OCI-LY7 (cell line): ENCODE measurements at regions of chr18 and their contacts with region 1.

Region 1: DNA sequence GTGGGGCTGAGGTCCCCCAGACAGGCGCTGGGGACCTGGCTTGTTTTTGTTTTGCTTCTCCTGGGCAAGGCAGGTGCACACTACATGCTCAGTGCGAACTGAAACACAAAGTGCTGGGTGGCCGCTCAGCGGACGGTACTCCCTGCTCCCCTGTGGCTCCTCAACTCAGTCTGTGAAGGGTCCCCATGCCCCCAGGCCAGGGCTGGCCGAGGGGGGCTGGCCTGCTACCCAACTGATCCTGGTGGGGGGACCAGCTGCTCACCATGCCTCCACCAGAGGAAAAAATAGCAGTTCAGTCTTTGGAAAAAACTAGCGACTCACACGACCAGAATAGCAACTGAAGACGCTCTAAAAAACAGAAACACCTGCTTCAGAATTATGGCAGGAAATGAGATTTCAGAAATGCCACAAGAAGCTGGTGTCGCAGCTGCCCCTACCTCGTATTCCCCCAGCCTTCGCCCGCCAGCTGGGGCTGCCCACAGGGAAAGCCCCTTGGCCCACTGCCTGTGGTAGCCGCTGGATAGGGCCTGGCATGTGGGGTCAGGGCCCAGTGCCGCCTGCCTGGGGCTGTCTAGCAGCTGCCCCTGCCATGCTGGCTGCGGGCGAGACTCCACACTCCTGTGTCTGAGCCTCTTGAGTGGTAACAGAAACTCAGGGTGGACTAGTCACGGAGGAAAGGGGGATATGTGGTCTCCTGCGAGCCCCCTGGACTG is 43.7 kb downstream of the MEX3C start:
- DNase-seq: peak; percentile 87
- H3K4me3 ChIP-seq: peak overlapping the region; percentile 59
- H3K27ac ChIP-seq: peak overlapping the region; percentile 100
- H3K4me1 ChIP-seq: peaks cover 62% of the 10 kb centered on the region
- CTCF ChIP-seq: no peak

Region 2: DNA sequence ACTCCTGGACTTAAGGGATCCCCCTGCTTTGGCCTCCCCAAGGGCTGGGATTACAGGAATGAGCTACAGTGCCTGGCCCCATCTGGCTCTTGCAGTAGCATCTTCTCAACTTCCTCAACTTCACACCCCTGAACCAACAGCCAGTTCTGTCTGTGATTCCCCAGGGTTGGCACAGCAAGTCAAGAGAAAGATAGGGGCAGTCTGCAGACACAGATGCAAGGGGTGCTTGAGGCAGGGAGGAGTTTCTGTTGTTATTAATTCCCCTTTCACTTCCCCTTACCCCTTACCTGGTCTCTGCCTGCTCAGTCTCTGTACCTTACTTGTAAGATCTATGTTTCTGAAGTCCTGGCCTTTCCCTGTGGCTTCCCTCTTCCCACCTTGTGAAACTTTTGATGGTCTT is 97.8 kb after region 1 on chr18:
- CTCF ChIA-PET with region 1: no interaction called
- POLR2A ChIA-PET with region 1: interaction called, 4 read pairs
- intact Hi-C with region 1: loop called (anchors 5 kb)
- DNase-seq: peak; percentile 86
- H3K4me3 ChIP-seq: no peak overlapping the region
- H3K27ac ChIP-seq: peak overlapping the region; percentile 75
- H3K4me1 ChIP-seq: peaks cover 23% of the 10 kb centered on the region
- CTCF ChIP-seq: no peak

Region 3: DNA sequence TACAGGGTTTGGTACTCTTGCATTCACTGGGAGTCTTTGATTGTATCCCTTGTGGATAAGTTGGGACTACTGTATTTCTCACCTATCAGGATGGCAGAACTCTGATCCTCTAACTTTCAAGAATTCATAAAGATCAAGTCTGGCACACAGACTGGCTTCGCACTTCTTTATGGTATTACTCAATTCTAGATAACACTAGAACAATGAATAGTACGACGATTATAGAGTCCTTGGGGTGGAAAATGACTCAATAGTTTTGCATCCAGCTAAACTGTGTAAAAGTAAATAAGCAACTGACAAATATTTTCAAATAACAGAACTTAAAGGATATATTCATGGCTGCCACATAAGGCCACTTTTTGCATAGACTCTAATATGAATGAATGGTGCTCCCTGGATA is 147.1 kb after region 1 on chr18:
- CTCF ChIA-PET with region 1: no interaction called
- POLR2A ChIA-PET with region 1: no interaction called
- intact Hi-C with region 1: loop called (anchors 5 kb)
- DNase-seq: no peak
- H3K4me3 ChIP-seq: no peak overlapping the region
- H3K27ac ChIP-seq: peak overlapping the region; percentile 28
- H3K4me1 ChIP-seq: peaks cover 6% of the 10 kb centered on the region
- CTCF ChIP-seq: no peak